CD8-positive, alpha-beta T cell (primary cell): ENCODE measurements at regions of chr6 and their contacts with region 1.

Region 1: GRCh38 chr6:41787219-41787917 is at the start of gene TOMM6:
- DNase-seq: peak; percentile 90 to 97 (median 96)
- ATAC-seq: peak; percentile 78
- H3K4me3 ChIP-seq: peak within 1 kb of the TSS; percentile 80 to 96
- H3K4me3 Mint-ChIP-seq: peak within 1 kb of the TSS; percentile 97
- H3K27ac ChIP-seq: peak within 1 kb of the TSS; percentile 89 to 94
- H3K27ac Mint-ChIP-seq: peak within 1 kb of the TSS; percentile 99
- H3K4me1 ChIP-seq: peaks cover 6% of the 10 kb centered on the region
- H3K4me1 Mint-ChIP-seq: peaks cover 15% of the 10 kb centered on the region
- H3K27me3 ChIP-seq: no peaks in the 10 kb centered on the region
- H3K27me3 Mint-ChIP-seq: no peaks in the 10 kb centered on the region
- CTCF ChIP-seq: peak; percentile 78
- total RNA-seq, gene TOMM6: 94.3 to 101 TPM

Region 2: DNA sequence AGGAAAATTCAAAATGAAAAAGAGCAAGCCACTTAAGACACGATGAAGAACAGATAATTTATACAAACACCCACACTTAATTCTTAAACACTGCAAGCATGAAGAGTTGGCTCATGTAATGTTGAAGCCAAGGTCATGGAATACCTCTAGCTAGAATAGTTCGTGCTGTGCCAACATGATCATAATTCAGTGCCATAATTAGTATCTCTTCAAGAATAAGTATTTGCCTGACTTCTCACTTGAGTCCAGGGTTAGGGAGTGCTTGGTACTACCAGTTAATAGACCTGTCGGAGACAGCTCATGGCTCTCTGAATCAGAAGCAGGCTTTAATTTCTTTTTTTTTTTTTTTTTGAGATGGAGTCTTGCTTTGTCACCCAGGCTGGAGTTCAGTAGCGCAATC is 954.7 kb before region 1 on chr6:
- CTCF ChIA-PET with region 1: no interaction called
- POLR2A ChIA-PET with region 1: no interaction called
- intact Hi-C with region 1: no loop called
- DNase-seq: no peak
- ATAC-seq: no peak
- H3K4me3 ChIP-seq: no peak overlapping the region
- H3K4me3 Mint-ChIP-seq: no peak overlapping the region
- H3K27ac ChIP-seq: no peak overlapping the region
- H3K27ac Mint-ChIP-seq: no peak overlapping the region
- H3K4me1 ChIP-seq: no peaks in the 10 kb centered on the region
- H3K4me1 Mint-ChIP-seq: no peaks in the 10 kb centered on the region
- H3K27me3 ChIP-seq: no peaks in the 10 kb centered on the region
- H3K27me3 Mint-ChIP-seq: peaks cover 26% of the 10 kb centered on the region
- CTCF ChIP-seq: no peak

Region 3: DNA sequence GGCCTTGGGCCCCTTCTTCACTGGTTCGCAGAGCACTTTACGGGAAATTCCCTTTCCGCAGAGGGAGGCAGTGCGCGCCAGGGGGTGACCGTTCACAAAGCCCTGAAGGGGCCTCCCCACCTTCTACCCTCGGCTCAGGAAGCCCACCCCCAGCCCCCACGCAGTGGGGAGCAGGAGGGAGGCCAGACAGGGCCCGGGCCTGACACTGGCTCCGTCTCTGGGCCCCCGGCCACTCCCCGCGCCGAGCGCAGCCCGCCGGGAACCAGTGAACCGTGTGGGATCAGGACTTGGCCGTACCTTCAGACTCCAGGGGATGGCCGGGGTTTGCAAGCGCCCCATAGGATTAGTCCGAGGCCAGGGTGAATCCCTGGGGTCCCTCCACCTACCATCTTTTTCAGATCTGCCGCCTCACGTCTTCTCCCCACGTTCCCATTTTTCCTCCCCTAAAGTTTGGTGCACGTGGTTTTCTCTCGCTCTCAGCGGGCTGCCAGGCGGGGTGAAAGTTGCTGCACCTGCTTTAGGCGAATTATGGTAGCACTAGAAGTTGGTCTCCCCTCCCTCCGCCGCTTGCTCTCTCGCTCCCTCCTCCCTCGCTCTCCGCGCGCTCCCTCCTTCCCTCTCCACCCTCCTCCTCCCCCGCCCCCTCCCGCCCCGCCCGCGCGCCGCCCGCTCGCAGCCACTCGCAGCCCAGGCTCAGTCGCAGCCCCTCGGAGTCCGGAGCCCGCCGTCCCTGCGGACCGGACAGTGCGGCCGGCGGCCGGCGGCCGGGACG is 241.5 kb before region 1 on chr6 and contains the start of gene FOXP4:
- CTCF ChIA-PET with region 1: no interaction called
- POLR2A ChIA-PET with region 1: no interaction called
- intact Hi-C with region 1: loop called in 1 of 2 experiments (anchors 2 kb)
- DNase-seq: peak; percentile 60 to 93 (median 84)
- ATAC-seq: peak; percentile 85
- H3K4me3 ChIP-seq: peak within 1 kb of the TSS; percentile 67 to 79
- H3K4me3 Mint-ChIP-seq: peak within 1 kb of the TSS; percentile 94
- H3K27ac ChIP-seq: no peak within 1 kb of the TSS
- H3K27ac Mint-ChIP-seq: peak within 1 kb of the TSS; percentile 77
- H3K4me1 ChIP-seq: peaks cover 28% of the 10 kb centered on the region
- H3K4me1 Mint-ChIP-seq: peaks cover 21% of the 10 kb centered on the region
- H3K27me3 ChIP-seq: peaks cover 18 to 20% of the 10 kb centered on the region in 2 experiments
- H3K27me3 Mint-ChIP-seq: peaks cover 16% of the 10 kb centered on the region
- CTCF ChIP-seq: no peak
- total RNA-seq, gene FOXP4: 9.9 to 11.4 TPM

Region 4: DNA sequence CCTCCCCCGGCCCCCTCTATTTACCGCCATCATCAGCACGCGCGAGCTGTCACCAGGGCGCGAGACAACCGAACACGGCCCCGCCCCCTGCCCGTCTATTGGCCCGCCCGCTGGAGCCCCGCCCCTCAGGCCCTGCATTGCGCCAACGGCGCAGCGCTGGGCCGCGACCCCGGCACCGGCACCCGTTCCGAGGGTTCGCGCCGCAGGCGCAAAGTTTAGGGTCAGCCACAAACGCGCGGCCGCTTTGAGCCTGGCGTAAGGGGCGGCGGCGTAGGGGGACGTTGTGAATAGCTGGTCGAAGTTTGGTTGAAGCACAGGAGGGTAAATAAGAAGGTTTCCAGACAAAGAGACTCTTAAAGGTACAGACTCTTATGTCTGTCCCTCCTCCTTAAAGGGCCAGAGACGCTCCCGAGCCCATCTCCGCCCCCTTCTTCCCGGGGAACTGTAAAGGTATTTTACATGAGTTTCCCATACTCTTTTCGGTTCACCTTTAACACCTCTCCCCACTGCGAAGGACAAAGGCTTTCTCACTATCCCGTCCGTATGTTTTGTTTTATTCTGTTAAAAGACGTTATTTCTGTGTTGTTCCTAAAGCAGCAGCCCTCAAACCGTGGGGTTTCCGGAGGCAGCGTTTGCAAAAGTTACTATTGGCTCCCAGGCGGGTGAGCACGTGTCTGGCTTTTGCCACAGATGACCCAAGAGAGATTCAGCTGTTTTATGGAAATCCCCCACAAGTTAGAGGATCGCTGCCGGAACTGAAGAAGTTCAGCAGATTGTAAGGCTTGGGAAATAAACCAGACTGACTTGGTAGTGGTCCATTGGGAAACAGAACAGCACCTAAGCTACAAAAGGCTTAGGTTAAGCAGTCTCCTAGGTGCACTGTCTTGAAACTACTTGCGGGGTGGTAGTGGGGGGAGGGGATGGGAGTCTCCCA is 108.2 kb after region 1 on chr6 and contains the start of gene USP49:
- CTCF ChIA-PET with region 1: interaction called, 4 read pairs
- POLR2A ChIA-PET with region 1: interaction called, 7 read pairs
- intact Hi-C with region 1: loop called (anchors 1 kb)
- DNase-seq: peak; percentile 80 to 94 (median 91)
- ATAC-seq: peak; percentile 95
- H3K4me3 ChIP-seq: peak within 1 kb of the TSS; percentile 78 to 90
- H3K4me3 Mint-ChIP-seq: no peak within 1 kb of the TSS
- H3K27ac ChIP-seq: peak within 1 kb of the TSS; percentile 55 to 77
- H3K27ac Mint-ChIP-seq: peak within 1 kb of the TSS; percentile 89
- H3K4me1 ChIP-seq: peaks cover 24% of the 10 kb centered on the region
- H3K4me1 Mint-ChIP-seq: peaks cover 10% of the 10 kb centered on the region
- H3K27me3 ChIP-seq: no peaks in the 10 kb centered on the region
- H3K27me3 Mint-ChIP-seq: no peaks in the 10 kb centered on the region
- CTCF ChIP-seq: no peak
- total RNA-seq, gene USP49: 1.6 to 1.8 TPM

Region 5: DNA sequence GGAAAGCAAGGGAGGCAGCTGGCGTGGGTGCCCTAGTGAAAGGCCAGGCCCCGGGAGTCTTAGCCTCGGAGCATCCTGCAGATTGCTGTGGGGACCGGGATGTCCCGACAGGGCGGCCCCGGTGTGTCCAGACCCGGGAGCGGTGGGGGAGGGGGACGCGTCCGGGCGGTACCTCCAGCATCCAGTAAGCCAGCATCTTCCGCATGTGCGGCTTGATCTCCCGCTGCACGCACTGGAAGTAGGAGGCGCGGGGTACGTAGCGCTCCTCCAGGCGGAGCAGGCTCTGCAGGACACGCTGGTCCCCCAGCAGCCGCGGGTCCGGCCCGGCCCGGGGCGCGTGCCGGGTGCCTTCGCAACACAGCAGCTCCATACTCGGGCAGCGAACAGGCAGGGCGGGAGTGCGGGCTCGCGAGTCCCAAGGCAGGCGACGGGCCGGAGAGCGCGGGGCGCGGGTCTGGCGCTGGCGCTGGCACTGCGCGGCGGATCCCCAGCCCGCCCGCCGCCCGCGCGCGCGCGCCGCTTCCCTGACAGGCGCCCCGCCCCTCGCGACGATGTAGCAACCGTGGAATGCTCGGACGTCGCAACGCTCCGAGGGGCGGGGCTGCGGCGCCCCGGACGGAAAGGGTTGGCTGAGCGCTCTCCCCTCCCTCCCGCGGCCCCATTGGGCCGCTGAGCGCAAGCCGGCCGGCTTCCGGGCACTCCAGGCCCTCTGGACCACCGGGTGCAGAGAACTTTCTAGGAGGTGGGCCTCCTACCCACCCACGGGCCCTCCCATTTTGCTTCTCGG is 154.1 kb after region 1 on chr6 and contains the start of gene CCND3:
- CTCF ChIA-PET with region 1: interaction called, 15 read pairs
- POLR2A ChIA-PET with region 1: interaction called, 5 read pairs
- intact Hi-C with region 1: loop called in 1 of 2 experiments (anchors 5 kb)
- DNase-seq: peak; percentile 53 to 92 (median 82)
- ATAC-seq: peak; percentile 63
- H3K4me3 ChIP-seq: peak within 1 kb of the TSS; percentile 51 to 97
- H3K4me3 Mint-ChIP-seq: peak within 1 kb of the TSS; percentile 84
- H3K27ac ChIP-seq: peak within 1 kb of the TSS; percentile 50 to 63
- H3K27ac Mint-ChIP-seq: peak within 1 kb of the TSS; percentile 89
- H3K4me1 ChIP-seq: peaks cover 64% of the 10 kb centered on the region
- H3K4me1 Mint-ChIP-seq: peaks cover 65% of the 10 kb centered on the region
- H3K27me3 ChIP-seq: no peaks in the 10 kb centered on the region
- H3K27me3 Mint-ChIP-seq: no peaks in the 10 kb centered on the region
- CTCF ChIP-seq: no peak
- total RNA-seq, gene CCND3: 129 to 135 TPM

Region 6: DNA sequence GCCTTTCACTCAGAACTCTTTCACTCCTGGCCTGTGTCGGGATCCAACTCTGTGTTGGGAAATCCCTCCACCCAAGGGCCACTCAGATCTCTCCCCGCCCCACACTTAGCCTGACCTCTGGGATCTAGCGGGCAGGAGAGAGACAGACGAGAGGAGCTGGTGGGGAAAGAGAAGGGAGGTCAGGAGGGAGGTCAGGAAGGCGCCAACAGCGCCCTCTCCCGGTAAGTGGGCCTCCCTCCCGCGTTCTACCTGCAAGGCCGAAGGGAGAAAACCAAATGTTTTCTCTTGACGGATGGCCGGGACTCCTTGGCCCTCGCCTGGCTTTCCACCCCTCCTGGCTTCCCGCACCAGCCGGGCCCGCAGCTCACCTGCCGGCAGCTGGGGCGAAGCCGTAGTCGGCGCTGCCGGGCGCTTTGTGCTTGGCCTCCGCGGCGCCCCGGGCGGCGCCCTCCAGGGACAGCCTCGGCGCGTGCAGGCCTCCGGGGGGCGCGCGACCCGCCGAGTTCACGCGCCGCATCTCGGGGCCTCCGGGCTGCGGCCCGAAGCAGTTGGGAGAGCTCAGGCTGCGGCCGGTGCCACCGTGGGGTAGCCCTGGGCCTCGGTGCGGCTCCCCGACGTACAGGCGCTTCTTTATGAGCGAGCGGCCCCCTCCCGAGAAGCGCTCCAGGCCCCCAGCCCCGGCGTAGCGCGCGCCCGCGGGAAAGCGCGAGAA is 316.9 kb after region 1 on chr6:
- CTCF ChIA-PET with region 1: interaction called, 12 read pairs
- POLR2A ChIA-PET with region 1: no interaction called
- intact Hi-C with region 1: loop called in 1 of 2 experiments (anchors 2 kb)
- DNase-seq: peak; percentile 38 to 86 (median 72)
- ATAC-seq: peak; percentile 89
- H3K4me3 ChIP-seq: peak overlapping the region; percentile 45 to 69
- H3K4me3 Mint-ChIP-seq: peak overlapping the region; percentile 72
- H3K27ac ChIP-seq: peak overlapping the region; percentile 11 to 38
- H3K27ac Mint-ChIP-seq: peak overlapping the region; percentile 62
- H3K4me1 ChIP-seq: peaks cover 8% of the 10 kb centered on the region
- H3K4me1 Mint-ChIP-seq: peaks cover 7% of the 10 kb centered on the region
- H3K27me3 ChIP-seq: no peaks in the 10 kb centered on the region
- H3K27me3 Mint-ChIP-seq: no peaks in the 10 kb centered on the region
- CTCF ChIP-seq: peak; percentile 98

Region 7: DNA sequence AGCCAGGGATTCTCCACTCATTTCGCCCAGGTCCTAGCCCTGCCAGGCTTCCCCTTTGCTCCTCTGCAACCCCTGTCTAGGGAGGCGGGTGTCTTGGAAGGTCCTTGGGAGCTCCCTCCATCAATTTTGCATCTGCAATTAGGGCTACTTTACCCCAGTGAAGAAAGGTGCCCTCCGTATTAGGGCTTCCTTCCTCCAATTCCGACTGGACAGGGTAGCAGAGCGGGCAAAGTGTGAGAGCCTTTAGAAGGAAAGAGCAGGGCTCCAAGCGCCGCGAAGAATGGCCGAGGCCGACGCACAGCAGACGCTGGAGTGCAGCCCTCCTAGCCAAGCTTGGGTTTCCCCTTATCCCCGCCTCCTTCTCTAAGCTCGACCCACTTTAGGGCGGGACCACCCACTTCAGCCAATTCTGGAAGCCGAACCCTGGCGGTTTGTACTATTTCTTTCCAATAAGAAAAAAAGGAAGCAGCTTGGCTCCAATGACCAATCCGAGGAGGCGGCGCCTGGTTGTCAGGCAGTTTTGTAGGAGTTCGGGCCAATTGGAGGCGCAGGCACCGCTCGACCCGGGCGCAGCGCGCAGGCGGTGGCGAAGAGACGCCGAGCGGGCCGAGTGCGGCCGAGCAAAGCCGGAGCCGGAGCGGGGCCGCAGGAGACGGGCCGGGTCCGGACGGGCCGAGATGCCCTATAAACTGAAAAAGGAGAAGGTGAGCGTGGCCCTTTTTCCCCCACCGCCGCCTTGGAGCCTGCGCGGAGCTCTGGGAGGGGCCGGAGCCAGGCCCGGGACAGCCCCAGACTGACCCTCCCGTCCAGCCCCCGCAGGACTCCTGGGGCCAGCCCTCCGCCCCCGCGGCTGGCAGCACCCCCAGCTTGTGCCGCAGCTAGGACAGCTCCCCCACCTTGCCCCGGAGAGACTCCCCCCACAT is 1196.9 kb after region 1 on chr6 and contains the start of gene PPP2R5D:
- CTCF ChIA-PET with region 1: no interaction called
- POLR2A ChIA-PET with region 1: no interaction called
- intact Hi-C with region 1: loop called in 1 of 2 experiments (anchors 5 kb)
- DNase-seq: peak; percentile 93 to 99 (median 96)
- ATAC-seq: peak; percentile 93
- H3K4me3 ChIP-seq: peak within 1 kb of the TSS; percentile 81 to 86
- H3K4me3 Mint-ChIP-seq: peak within 1 kb of the TSS; percentile 94
- H3K27ac ChIP-seq: peak within 1 kb of the TSS; percentile 78 to 86
- H3K27ac Mint-ChIP-seq: peak within 1 kb of the TSS; percentile 95
- H3K4me1 ChIP-seq: peaks cover 44% of the 10 kb centered on the region
- H3K4me1 Mint-ChIP-seq: peaks cover 62% of the 10 kb centered on the region
- H3K27me3 ChIP-seq: no peaks in the 10 kb centered on the region
- H3K27me3 Mint-ChIP-seq: no peaks in the 10 kb centered on the region
- CTCF ChIP-seq: no peak
- total RNA-seq, gene PPP2R5D: 14.1 to 19.5 TPM

Region 8: GRCh38 chr6:43575772-43576551 is 1788.6 kb after region 1 on chr6 and contains the starts of genes POLH and XPO5:
- CTCF ChIA-PET with region 1: no interaction called
- POLR2A ChIA-PET with region 1: no interaction called
- intact Hi-C with region 1: loop called (anchors 5 kb)
- DNase-seq: peak; percentile 80 to 97 (median 90)
- ATAC-seq: peak; percentile 96
- H3K4me3 ChIP-seq: peak within 1 kb of the TSS; percentile 78 to 89
- H3K4me3 Mint-ChIP-seq: peak within 1 kb of the TSS; percentile 95
- H3K27ac ChIP-seq: peak within 1 kb of the TSS; percentile 55 to 66
- H3K27ac Mint-ChIP-seq: peak within 1 kb of the TSS; percentile 93
- H3K4me1 ChIP-seq: peaks cover 20% of the 10 kb centered on the region
- H3K4me1 Mint-ChIP-seq: peaks cover 36% of the 10 kb centered on the region
- H3K27me3 ChIP-seq: no peaks in the 10 kb centered on the region
- H3K27me3 Mint-ChIP-seq: no peaks in the 10 kb centered on the region
- CTCF ChIP-seq: no peak
- total RNA-seq, gene POLH: 3.4 to 3.7 TPM
- total RNA-seq, gene XPO5: 29.6 to 39.9 TPM